CD4-positive, alpha-beta T cell (primary cell): ENCODE measurements at regions of chr11 and their contacts with region 1.

Region 1: GRCh38 chr11:3880724-3881123 is 25.3 kb downstream of the STIM1 start:
- DNase-seq: no peak
- ATAC-seq: no peak
- H3K4me3 ChIP-seq: no peak overlapping the region
- H3K4me3 Mint-ChIP-seq: no peak overlapping the region
- H3K27ac ChIP-seq: no peak overlapping the region
- H3K27ac Mint-ChIP-seq: peak overlapping the region; percentile 60
- H3K4me1 ChIP-seq: peaks cover 38% of the 10 kb centered on the region
- H3K4me1 Mint-ChIP-seq: peaks cover 80% of the 10 kb centered on the region
- H3K27me3 ChIP-seq: no peaks in the 10 kb centered on the region
- H3K27me3 Mint-ChIP-seq: no peaks in the 10 kb centered on the region
- CTCF ChIP-seq: no peak

Region 2: DNA sequence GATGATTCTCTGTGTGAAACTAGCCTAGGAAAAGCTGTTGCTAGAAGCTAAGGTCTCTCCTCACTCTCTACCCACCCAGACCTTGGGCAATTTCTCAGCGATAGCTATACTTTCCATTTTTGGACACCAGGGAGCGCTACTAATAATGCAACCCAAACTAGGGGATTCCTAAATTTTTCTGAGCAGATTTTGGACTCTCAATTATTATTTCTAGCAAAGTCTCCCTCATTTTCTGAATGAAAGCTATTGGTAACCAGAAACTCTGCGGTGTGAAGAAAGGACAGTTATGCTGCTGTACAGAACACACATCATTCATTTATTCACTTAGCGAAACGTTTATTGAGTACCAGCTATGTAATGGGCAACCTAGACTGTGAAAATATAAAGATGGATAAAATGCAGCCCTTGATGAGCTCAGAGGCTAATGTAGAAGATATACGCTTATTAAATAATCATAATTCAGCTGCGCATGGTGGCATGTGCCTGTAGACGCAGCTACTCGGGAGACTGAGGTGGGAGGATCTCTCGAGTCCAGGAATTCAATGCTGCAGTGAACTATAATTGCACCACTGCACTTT is 31.3 kb before region 1 on chr11:
- CTCF ChIA-PET with region 1: interaction called, 44 read pairs
- POLR2A ChIA-PET with region 1: interaction called, 22 read pairs
- intact Hi-C with region 1: loop called in 1 of 2 experiments (anchors 5 kb)
- DNase-seq: peak in 7 of 14 experiments; percentile 34 to 82 (median 69)
- ATAC-seq: peak; percentile 47
- H3K4me3 ChIP-seq: no peak overlapping the region
- H3K4me3 Mint-ChIP-seq: peak overlapping the region; percentile 1
- H3K27ac ChIP-seq: no peak overlapping the region
- H3K27ac Mint-ChIP-seq: peak overlapping the region; percentile 70
- H3K4me1 ChIP-seq: peaks cover 30% of the 10 kb centered on the region
- H3K4me1 Mint-ChIP-seq: peaks cover 45% of the 10 kb centered on the region
- H3K27me3 ChIP-seq: no peaks in the 10 kb centered on the region
- H3K27me3 Mint-ChIP-seq: no peaks in the 10 kb centered on the region
- CTCF ChIP-seq: peak; percentile 79